CD4-positive, alpha-beta memory T cell (primary cell): ENCODE measurements at regions of chr18 and their contacts with region 1.

Region 1: DNA sequence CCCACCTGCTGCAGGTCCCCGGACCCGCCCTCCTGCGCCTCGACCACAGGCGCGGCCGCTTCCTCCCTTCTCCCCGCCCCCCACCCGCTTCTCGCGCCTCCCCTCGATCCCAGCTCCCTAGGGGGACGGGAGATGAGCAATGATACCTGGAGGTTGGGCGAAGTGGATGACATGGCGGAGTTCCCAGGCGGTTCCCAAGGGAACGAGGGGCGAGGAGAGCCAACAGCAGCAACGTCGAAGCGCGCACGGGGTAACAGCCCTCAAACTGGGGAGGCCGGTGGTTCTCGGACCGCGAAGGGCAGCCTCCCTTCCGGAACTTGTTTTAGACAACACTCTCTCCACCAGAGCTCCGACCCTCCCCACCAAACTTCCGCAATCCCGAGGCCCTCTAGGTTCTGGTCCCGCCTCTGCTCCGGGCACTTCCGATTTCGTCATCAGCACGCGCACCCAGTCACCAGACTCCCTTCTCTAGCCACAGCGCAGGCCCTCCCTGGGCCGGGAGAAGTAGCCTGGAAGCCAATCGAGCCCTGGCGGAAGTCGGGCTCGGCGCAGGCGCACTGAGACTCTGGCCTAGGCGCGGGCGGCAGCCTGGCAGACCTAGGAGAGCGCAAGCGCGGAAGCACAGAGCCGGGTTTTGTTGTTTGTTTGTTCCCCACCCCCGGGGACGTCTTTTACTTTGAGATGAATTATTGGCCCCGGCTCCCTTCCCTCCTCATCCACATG is at the start of gene VPS4B:
- DNase-seq: peak; percentile 99 to 100 (median 100)
- H3K4me3 ChIP-seq: peak within 1 kb of the TSS; percentile 73 to 98
- H3K4me3 Mint-ChIP-seq: peak within 1 kb of the TSS; percentile 94 to 100 (median 96)
- H3K27ac ChIP-seq: peak within 1 kb of the TSS; percentile 98
- H3K27ac Mint-ChIP-seq: peak within 1 kb of the TSS; percentile 94 to 99 (median 97)
- H3K4me1 ChIP-seq: peaks cover 55% of the 10 kb centered on the region
- H3K4me1 Mint-ChIP-seq: peaks cover 19 to 29% (median 21%) of the 10 kb centered on the region in 4 donors
- H3K27me3 ChIP-seq: no peaks in the 10 kb centered on the region
- H3K27me3 Mint-ChIP-seq: peaks cover 3 to 5% of the 10 kb centered on the region in 2 donors
- total RNA-seq, gene VPS4B: 93.0 to 94.9 TPM

Region 2: GRCh38 chr18:63410792-63411191 is 11.5 kb before region 1 on chr18:
- CTCF ChIA-PET with region 1: interaction called, 7 read pairs
- POLR2A ChIA-PET with region 1: interaction called, 38 read pairs
- intact Hi-C with region 1: loop called (anchors 1 kb)
- DNase-seq: no peak
- H3K4me3 ChIP-seq: no peak overlapping the region
- H3K4me3 Mint-ChIP-seq: no peak overlapping the region
- H3K27ac ChIP-seq: no peak overlapping the region
- H3K27ac Mint-ChIP-seq: peak overlapping the region in 4 of 7 donors; percentile 65 to 89 (median 84)
- H3K4me1 ChIP-seq: peaks cover 37% of the 10 kb centered on the region
- H3K4me1 Mint-ChIP-seq: peaks cover 40 to 59% (median 49%) of the 10 kb centered on the region in 4 donors
- H3K27me3 ChIP-seq: no peaks in the 10 kb centered on the region
- H3K27me3 Mint-ChIP-seq: no peaks in the 10 kb centered on the region

Region 3: GRCh38 chr18:63969960-63970802 is 547.9 kb after region 1 on chr18 and contains the start of gene SERPINB8:
- CTCF ChIA-PET with region 1: no interaction called
- POLR2A ChIA-PET with region 1: interaction called, 5 read pairs
- intact Hi-C with region 1: loop called (anchors 5 kb)
- DNase-seq: peak; percentile 73 to 89 (median 77)
- H3K4me3 ChIP-seq: peak within 1 kb of the TSS; percentile 64 to 86
- H3K4me3 Mint-ChIP-seq: peak within 1 kb of the TSS; percentile 87 to 99 (median 96)
- H3K27ac ChIP-seq: peak within 1 kb of the TSS; percentile 90
- H3K27ac Mint-ChIP-seq: peak within 1 kb of the TSS; percentile 82 to 98 (median 96)
- H3K4me1 ChIP-seq: peaks cover 16% of the 10 kb centered on the region
- H3K4me1 Mint-ChIP-seq: peaks cover 22 to 37% (median 25%) of the 10 kb centered on the region in 4 donors
- H3K27me3 ChIP-seq: no peaks in the 10 kb centered on the region
- H3K27me3 Mint-ChIP-seq: no peaks in the 10 kb centered on the region
- total RNA-seq, gene SERPINB8: 13.8 to 16.3 TPM